ENCODE measurements at regions of chr20 and their contacts with region 1.

Region 1: DNA sequence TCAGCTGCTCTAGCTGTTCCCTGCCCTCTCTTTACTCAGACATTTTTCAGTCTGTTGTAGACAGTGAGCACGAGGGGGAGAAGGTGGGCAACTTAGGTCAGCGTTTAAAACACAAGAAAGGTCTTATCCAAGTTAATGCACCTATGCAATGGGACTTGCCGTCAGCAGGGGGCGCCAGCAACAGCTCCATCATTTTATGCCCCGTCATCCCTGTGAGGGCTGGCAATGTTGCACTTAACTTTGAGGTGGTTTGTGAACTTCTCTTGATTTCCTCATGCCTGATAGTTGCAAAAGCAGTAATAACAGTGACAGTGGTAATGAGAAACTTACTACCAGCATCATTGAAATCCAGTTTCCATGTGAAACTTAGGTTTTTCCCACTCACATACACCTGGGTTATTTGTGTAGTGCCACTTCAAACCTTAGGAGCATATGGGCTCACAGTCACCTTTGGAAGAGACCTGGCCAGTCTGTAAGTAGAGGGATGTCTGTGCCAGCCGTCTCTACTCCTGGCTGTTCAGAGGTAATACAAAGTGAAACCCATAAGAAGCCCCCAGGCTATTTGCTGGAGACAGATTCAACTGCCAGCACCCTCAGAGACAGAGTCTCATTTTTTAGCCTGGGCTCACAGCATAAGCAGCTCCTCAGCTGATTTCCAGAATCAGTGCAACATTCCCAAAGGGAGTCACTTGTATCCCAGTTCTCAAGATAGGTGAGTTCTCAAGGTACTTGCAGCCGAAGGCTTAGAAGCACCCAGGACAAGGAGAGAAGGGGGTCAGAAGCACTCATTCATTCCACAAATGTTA is 44.8 kb upstream of the ID1 start:
- DNase-seq: peak; percentile 85 to 87
- H3K4me3 ChIP-seq: no peak overlapping the region
- H3K4me3 Mint-ChIP-seq: no peak overlapping the region
- H3K27ac Mint-ChIP-seq: peak overlapping the region; percentile 68
- H3K4me1 ChIP-seq: peaks cover 8% of the 10 kb centered on the region
- H3K4me1 Mint-ChIP-seq: peaks cover 4% of the 10 kb centered on the region
- H3K27me3 ChIP-seq: no peaks in the 10 kb centered on the region
- H3K27me3 Mint-ChIP-seq: no peaks in the 10 kb centered on the region
- CTCF ChIP-seq: peak; percentile 98 to 99

Region 2: DNA sequence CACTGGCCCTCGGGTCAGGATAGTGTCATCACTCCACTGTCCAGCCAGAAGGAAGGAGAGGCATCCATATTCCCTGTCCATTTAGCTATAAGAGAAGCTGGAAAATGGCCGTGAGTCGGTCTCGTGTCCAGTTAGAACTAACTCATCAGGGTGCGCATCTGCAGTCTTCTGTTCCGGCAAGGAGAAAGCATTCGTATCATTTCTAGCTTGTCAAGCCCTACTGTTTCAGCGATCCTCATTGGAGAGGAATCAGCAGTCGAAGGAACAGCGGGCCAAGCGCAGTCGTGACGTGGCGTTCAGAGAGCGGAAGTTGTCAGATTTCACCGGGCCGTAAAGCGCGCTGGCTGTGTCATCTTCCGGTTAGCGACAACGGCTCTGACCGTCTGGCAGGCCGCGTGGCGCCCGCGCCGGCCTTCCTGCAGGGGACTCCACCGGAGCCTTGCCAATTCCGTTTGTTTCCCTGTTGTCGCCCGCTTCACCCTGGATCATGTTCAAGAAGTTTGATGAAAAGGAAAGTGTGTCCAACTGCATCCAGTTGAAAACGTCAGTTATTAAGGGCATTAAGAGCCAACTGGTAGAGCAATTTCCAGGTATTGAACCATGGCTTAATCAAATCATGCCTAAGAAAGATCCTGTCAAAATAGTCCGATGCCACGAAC is 13.2 kb before region 1 on chr20:
- CTCF ChIA-PET with region 1: interaction called, 14 read pairs
- POLR2A ChIA-PET with region 1: interaction called, 7 read pairs
- intact Hi-C with region 1: no loop called
- DNase-seq: peak; percentile 81 to 85
- H3K4me3 ChIP-seq: peak overlapping the region; percentile 26
- H3K4me3 Mint-ChIP-seq: peak overlapping the region; percentile 69
- H3K27ac Mint-ChIP-seq: peak overlapping the region; percentile 80
- H3K4me1 ChIP-seq: peaks cover 2% of the 10 kb centered on the region; the same call in 1 of the 2 replicates
- H3K4me1 Mint-ChIP-seq: peaks cover 4% of the 10 kb centered on the region
- H3K27me3 ChIP-seq: no peaks in the 10 kb centered on the region
- H3K27me3 Mint-ChIP-seq: no peaks in the 10 kb centered on the region
- CTCF ChIP-seq: peak in 1 of 2 experiments; percentile 11

Region 3: DNA sequence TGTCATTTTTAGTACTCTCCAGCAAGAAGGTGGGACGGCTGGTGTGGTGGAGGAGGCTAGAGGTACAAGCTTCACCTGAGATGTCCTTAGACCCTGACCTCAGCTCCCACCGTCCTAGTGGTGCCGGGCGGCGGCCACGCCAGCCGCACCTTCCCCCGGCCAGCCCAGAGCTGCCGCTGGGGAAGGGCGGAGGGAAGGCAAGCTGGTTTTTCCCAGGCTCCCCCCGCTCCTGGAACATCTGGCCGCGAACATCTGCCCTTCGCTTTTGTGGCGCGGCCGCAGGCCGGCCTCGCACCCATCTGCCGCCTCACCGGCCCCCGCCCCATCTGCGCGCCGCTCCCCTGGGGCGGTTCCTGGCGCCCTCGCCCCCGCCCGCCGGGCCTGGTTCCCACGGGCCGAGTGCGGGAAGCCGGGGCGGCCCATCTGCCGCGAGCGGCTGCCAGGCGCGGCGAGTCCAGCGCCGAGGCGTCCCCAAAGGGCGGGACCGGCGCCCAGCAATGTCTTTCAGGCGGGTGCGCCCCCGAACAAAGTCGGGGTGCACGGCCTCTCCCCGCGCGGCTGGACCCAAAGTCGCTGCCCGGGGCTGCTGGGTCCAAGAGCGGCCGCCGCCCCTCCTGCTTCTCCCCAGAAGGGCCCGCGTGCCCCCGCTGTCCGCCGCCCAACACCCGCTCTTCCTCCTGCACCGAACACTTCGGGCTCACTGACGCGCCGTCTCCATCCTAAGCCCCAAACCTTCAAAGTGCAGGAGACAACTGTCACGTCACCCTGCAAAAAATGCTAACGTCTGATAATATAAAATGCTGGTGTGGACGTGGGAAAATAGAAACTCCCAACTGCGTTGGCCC is 27.5 kb after region 1 on chr20:
- CTCF ChIA-PET with region 1: interaction called, 11 read pairs
- POLR2A ChIA-PET with region 1: no interaction called
- intact Hi-C with region 1: no loop called
- DNase-seq: peak in 1 of 2 experiments; percentile 68
- H3K4me3 ChIP-seq: peak overlapping the region; percentile 53
- H3K4me3 Mint-ChIP-seq: peak overlapping the region; percentile 72
- H3K27ac Mint-ChIP-seq: peak overlapping the region; percentile 78
- H3K4me1 ChIP-seq: peaks cover 23% of the 10 kb centered on the region
- H3K4me1 Mint-ChIP-seq: peaks cover 17% of the 10 kb centered on the region
- H3K27me3 ChIP-seq: no peaks in the 10 kb centered on the region
- H3K27me3 Mint-ChIP-seq: no peaks in the 10 kb centered on the region
- CTCF ChIP-seq: no peak

Region 4: GRCh38 chr20:31595654-31596411 is 35.5 kb after region 1 on chr20:
- CTCF ChIA-PET with region 1: interaction called, 7 read pairs
- POLR2A ChIA-PET with region 1: interaction called, 15 read pairs
- intact Hi-C with region 1: no loop called
- DNase-seq: peak; percentile 61 to 87
- H3K4me3 ChIP-seq: no peak overlapping the region
- H3K4me3 Mint-ChIP-seq: no peak overlapping the region
- H3K27ac Mint-ChIP-seq: peak overlapping the region; percentile 66
- H3K4me1 ChIP-seq: peaks cover 25% of the 10 kb centered on the region
- H3K4me1 Mint-ChIP-seq: peaks cover 21% of the 10 kb centered on the region
- H3K27me3 ChIP-seq: no peaks in the 10 kb centered on the region
- H3K27me3 Mint-ChIP-seq: no peaks in the 10 kb centered on the region
- CTCF ChIP-seq: no peak

Measured in Caco-2 (cell line).